ENCODE measurements at regions of chr2 and their contacts with region 1.

Region 1: GRCh38 chr2:36951574-36951973 is 14.8 kb downstream of the STRN start:
- H3K4me3 ChIP-seq: no peak overlapping the region
- H3K27ac ChIP-seq: no peak overlapping the region
- H3K4me1 ChIP-seq: peaks cover 8% of the 10 kb centered on the region
- CTCF ChIP-seq: no peak

Region 2: GRCh38 chr2:37068686-37069085 is 117.1 kb after region 1 on chr2:
- CTCF ChIA-PET with region 1: no interaction called
- POLR2A ChIA-PET with region 1: interaction called, 11 read pairs
- H3K4me3 ChIP-seq: no peak overlapping the region
- H3K27ac ChIP-seq: no peak overlapping the region
- H3K4me1 ChIP-seq: no peaks in the 10 kb centered on the region
- CTCF ChIP-seq: no peak